Activated naive CD4-positive, alpha-beta T cell treated with anti-CD3 and anti-CD28 coated beads, Interleukin-2, amount 10 ng/mL, durations not matched to agents 7 days and 5 days (primary cell): ENCODE measurements at regions of chr1 and their contacts with region 1.

Region 1: GRCh38 chr1:12124693-12125421 is 41.9 kb upstream of the TNFRSF1B start:
- DNase-seq: peak; percentile 85
- H3K4me3 Mint-ChIP-seq: no peak overlapping the region
- H3K27ac Mint-ChIP-seq: peak overlapping the region; percentile 65
- H3K4me1 Mint-ChIP-seq: peaks cover 51% of the 10 kb centered on the region
- H3K27me3 Mint-ChIP-seq: peaks cover 26% of the 10 kb centered on the region

Region 2: GRCh38 chr1:12150456-12151200 is 25.8 kb after region 1 on chr1:
- CTCF ChIA-PET with region 1: interaction called, 16 read pairs
- DNase-seq: peak; percentile 55
- H3K4me3 Mint-ChIP-seq: peak overlapping the region; percentile 73
- H3K27ac Mint-ChIP-seq: peak overlapping the region; percentile 100
- H3K4me1 Mint-ChIP-seq: peaks cover 91% of the 10 kb centered on the region
- H3K27me3 Mint-ChIP-seq: no peaks in the 10 kb centered on the region

Region 3: GRCh38 chr1:12177999-12178441 is 53.2 kb after region 1 on chr1:
- CTCF ChIA-PET with region 1: interaction called, 116 read pairs
- DNase-seq: peak; percentile 86
- H3K4me3 Mint-ChIP-seq: peak overlapping the region; percentile 64
- H3K27ac Mint-ChIP-seq: peak overlapping the region; percentile 99
- H3K4me1 Mint-ChIP-seq: peaks cover 95% of the 10 kb centered on the region
- H3K27me3 Mint-ChIP-seq: no peaks in the 10 kb centered on the region

Region 4: DNA sequence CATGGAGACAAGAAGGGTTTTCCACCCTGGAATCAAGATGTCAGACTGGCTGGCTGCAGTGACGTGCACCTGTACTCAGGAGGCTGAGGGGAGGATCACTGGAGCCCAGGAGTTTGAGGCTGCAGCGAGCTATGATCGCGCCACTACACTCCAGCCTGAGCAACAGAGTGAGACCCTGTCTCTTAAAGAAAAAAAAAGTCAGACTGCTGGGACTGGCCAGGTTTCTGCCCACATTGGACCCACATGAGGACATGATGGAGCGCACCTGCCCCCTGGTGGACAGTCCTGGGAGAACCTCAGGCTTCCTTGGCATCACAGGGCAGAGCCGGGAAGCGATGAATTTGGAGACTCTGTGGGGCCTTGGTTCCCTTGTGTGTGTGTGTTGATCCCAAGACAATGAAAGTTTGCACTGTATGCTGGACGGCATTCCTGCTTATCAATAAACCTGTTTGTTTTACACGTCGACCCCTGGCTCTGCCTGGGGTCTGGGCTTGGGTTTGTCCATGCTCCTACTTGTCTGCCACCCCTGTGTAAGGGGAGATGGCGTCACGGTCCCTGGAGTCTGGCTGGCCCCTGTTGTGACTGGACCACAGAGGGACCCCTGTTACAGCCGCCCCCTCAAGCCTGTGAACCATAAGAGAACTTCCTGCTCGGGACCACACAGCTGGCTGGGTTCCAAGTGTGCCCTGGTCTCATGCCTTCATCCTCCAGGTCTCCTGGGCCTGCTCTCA is 84.1 kb after region 1 on chr1:
- CTCF ChIA-PET with region 1: interaction called, 252 read pairs
- DNase-seq: peak; percentile 89
- H3K4me3 Mint-ChIP-seq: no peak overlapping the region
- H3K27ac Mint-ChIP-seq: peak overlapping the region; percentile 89
- H3K4me1 Mint-ChIP-seq: peaks cover 65% of the 10 kb centered on the region
- H3K27me3 Mint-ChIP-seq: peaks cover 17% of the 10 kb centered on the region

Region 5: DNA sequence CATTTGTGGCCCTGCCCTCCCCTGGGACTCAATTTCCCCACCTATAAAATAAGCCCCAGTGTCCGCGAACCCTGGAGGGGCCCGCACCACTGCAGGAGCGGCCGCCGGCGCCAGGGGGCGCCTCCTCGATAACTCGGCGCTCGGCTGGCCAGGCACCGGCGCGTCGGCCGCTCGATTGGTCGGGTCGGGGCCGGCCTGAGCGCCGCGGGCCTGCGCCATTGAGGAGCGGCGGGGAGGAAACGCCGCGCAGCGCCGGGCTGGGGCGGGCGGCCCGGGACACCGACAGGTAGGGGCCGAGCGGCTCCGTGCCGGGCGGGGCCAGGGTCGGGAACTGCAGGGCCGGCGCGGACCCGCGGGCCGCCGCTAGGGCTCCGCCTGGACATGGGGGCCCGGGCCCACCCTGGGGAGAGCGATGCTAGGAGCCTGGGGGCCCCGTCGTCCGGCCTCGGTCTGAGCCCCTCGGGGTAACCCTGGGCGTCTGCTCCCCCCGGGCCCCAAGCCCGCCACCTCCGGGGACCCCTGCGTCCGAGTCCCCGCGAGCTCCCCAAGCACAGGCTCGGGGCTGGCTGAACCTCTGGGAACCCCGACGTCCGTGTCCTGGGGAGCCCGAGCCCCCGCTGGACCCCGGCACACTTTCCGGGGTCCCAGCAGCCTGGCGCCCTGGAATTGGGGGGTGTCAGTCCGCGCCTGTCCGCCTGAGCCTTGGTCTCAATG is 105.1 kb after region 1 on chr1 and contains the start of gene VPS13D:
- CTCF ChIA-PET with region 1: interaction called, 23 read pairs
- DNase-seq: peak; percentile 88
- H3K4me3 Mint-ChIP-seq: peak within 1 kb of the TSS; percentile 86
- H3K27ac Mint-ChIP-seq: peak within 1 kb of the TSS; percentile 81
- H3K4me1 Mint-ChIP-seq: peaks cover 19% of the 10 kb centered on the region
- H3K27me3 Mint-ChIP-seq: peaks cover 18% of the 10 kb centered on the region